Activated CD4-positive, alpha-beta T cell treated with anti-CD3 and anti-CD28 coated beads for 36 hours (primary cell): ENCODE measurements at regions of chr6 and their contacts with region 1.

Region 1: DNA sequence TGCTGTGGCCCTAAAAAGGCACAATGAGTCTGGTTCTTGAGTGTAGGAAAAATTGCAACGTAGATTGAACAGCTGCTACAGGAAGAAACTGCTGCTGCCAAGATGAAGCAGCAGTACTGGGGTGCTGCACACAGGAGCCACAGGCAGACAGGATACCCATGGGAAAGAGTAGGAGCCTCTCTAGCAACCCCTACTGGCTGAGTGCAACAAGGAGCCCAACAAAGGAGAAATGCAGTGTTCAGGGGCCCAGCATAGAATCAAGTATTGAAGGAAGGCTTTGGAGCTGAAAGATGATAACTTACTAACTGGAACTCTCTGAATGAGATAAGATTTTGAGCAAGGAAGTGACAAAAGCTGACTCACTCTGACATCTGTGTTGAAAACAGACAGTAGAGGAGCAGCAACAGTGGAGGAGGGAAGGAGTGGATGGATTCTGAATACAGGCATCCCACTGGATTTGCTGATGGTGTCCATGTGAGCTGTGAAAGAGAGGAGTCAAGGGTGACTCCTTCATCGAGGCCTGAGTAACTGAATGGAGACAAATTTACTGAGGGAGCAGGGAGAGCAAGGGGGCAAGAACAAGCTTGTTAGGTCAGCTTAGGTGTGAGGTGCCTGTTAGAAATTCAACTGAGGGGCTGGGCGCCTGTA is 534.7 kb upstream of the JARID2 start:
- DNase-seq: peak; percentile 82
- ATAC-seq: peak; percentile 85
- H3K4me3 Mint-ChIP-seq: peak overlapping the region; percentile 42
- H3K27ac Mint-ChIP-seq: peak overlapping the region; percentile 100
- H3K4me1 Mint-ChIP-seq: peaks cover 57% of the 10 kb centered on the region
- H3K27me3 Mint-ChIP-seq: no peaks in the 10 kb centered on the region

Region 2: GRCh38 chr6:14423330-14423729 is 287.9 kb before region 1 on chr6:
- CTCF ChIA-PET with region 1: no interaction called
- POLR2A ChIA-PET with region 1: interaction called, 3 read pairs
- intact Hi-C with region 1: loop called in 1 of 2 experiments (anchors 1 kb)
- DNase-seq: no peak
- ATAC-seq: no peak
- H3K4me3 Mint-ChIP-seq: no peak overlapping the region
- H3K27ac Mint-ChIP-seq: peak overlapping the region; percentile 96
- H3K4me1 Mint-ChIP-seq: peaks cover 54% of the 10 kb centered on the region
- H3K27me3 Mint-ChIP-seq: no peaks in the 10 kb centered on the region

Region 3: DNA sequence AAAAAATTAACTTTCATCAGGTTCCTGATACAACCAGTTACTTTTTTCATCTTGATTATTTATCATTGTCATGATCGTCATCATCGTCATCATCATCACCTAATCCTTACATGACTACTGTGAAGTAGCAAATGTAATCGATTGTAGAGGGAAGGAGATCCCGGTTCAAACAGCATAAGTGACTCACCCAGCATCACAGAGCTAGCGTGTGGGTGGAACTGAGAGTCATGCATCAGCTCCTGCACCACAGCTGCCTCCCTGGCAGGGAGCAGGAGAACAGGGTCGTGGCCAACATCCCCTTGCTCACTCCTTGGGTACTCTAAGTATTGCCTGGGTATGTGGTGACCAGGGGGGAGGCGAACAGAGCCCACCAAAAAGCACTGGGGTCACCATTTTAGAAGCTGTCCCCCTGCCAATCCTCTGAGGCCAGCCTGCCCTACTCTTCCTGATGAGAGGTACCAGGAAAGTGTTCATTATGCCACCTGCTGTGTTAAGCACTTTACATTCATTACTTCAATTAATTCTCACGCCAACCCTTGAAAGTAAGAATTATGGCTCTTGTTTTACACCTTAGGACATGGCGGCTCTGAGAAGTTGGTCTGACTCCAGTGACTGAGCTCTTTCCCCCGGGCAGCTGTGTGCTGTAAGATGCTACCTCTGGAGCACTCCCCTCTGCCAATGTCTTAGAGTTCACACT is 168.4 kb before region 1 on chr6:
- CTCF ChIA-PET with region 1: no interaction called
- POLR2A ChIA-PET with region 1: no interaction called
- intact Hi-C with region 1: loop called (anchors 2 to 5 kb)
- DNase-seq: peak; percentile 90
- ATAC-seq: peak; percentile 99
- H3K4me3 Mint-ChIP-seq: no peak overlapping the region
- H3K27ac Mint-ChIP-seq: peak overlapping the region; percentile 79
- H3K4me1 Mint-ChIP-seq: peaks cover 41% of the 10 kb centered on the region
- H3K27me3 Mint-ChIP-seq: peaks cover 2% of the 10 kb centered on the region

Region 4: GRCh38 chr6:14612016-14612980 is 98.9 kb before region 1 on chr6:
- CTCF ChIA-PET with region 1: no interaction called
- POLR2A ChIA-PET with region 1: no interaction called
- intact Hi-C with region 1: no loop called
- DNase-seq: no peak
- ATAC-seq: no peak
- H3K4me3 Mint-ChIP-seq: no peak overlapping the region
- H3K27ac Mint-ChIP-seq: no peak overlapping the region
- H3K4me1 Mint-ChIP-seq: peaks cover 16% of the 10 kb centered on the region
- H3K27me3 Mint-ChIP-seq: peaks cover 2% of the 10 kb centered on the region

Region 5: GRCh38 chr6:14665827-14666724 is 45.1 kb before region 1 on chr6:
- CTCF ChIA-PET with region 1: interaction called, 4 read pairs
- POLR2A ChIA-PET with region 1: interaction called, 4 read pairs
- intact Hi-C with region 1: loop called in 1 of 2 experiments (anchors 5 kb)
- DNase-seq: peak; percentile 81
- ATAC-seq: peak; percentile 79
- H3K4me3 Mint-ChIP-seq: no peak overlapping the region
- H3K27ac Mint-ChIP-seq: no peak overlapping the region
- H3K4me1 Mint-ChIP-seq: peaks cover 32% of the 10 kb centered on the region
- H3K27me3 Mint-ChIP-seq: no peaks in the 10 kb centered on the region

Region 6: DNA sequence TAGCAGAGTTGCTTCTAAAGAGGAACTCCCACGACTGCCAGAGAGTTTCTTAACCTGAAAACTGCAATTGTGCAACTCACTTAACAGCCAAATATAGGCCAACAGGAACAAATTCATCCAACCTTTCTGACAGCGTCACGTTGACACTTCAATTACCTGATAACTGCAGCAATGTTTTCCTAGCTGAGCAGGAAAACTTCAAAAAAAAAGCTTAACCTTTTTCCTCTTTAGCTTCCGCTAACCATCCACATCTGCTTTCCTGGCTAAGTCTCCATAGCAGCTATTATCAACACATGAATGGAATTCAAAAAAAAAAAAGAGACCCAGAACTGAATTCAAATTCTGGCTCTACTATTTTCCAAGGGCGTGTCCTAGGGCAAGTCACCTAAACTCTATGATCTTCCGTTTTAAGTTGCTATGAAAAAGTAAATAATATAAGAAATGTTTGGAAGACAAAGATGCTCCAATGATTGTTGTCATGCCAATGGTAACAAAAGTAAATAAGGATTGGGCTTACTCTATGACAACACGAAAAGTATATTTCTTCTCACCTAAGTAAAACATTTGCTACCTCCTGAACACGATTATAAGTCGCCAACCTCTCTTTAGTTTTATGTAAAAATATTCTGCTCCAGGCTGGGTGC is 10.0 kb after region 1 on chr6:
- CTCF ChIA-PET with region 1: interaction called, 13 read pairs
- POLR2A ChIA-PET with region 1: no interaction called
- intact Hi-C with region 1: no loop called
- DNase-seq: no peak
- ATAC-seq: peak; percentile 13
- H3K4me3 Mint-ChIP-seq: no peak overlapping the region
- H3K27ac Mint-ChIP-seq: peak overlapping the region; percentile 52
- H3K4me1 Mint-ChIP-seq: peaks cover 52% of the 10 kb centered on the region
- H3K27me3 Mint-ChIP-seq: no peaks in the 10 kb centered on the region